AG04450 (cell line): ENCODE measurements at regions of chr17 and their contacts with region 1.

Region 1: DNA sequence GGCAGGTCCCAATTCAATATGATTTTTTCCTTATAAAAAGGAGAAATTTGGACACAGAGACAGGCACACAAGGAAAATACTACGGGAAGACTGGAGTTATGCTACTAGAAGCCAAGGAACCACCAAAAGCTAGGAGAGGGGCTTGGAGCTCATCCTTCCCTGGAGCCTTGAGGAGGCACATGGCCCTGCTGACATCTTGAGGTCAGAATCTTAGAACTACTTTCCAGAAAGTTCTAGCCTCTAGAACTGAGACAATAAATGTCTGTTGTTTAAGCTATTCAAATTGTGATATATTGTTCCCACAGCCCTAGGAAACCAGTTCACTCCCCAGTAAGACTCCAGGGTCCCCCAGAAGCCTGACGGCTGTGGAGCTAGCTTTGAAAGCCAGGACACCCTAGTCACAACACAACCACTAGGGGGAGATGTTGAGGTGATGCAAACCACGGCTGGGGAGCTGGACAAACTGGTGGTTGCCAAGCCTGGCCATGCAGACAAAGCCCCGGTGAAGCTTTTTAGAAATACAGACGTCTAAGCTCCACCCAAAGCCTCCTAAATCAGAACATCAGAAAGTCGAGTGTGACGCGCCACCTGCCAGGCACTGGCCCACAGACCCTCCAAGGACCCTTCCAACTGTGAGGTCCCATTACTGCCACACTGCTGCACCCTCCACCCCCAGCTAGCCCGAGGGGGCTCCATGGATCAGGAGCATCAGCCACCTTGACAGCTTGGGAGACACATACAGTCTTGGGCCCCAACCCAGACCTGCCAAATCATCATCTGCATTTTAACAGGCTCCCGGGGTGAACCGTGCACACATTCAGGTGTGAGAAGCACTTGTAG is 106.4 kb downstream of the SLC39A11 start:
- DNase-seq: peak; percentile 56
- H3K4me3 ChIP-seq: no peak overlapping the region
- H3K27ac ChIP-seq: no peak overlapping the region
- H3K27me3 ChIP-seq: no peaks in the 10 kb centered on the region
- CTCF ChIP-seq: peak; percentile 91

Region 2: GRCh38 chr17:72955391-72956140 is 30.5 kb before region 1 on chr17:
- CTCF ChIA-PET with region 1: interaction called, 12 read pairs
- POLR2A ChIA-PET with region 1: no interaction called
- DNase-seq: no peak
- H3K4me3 ChIP-seq: no peak overlapping the region
- H3K27ac ChIP-seq: no peak overlapping the region
- H3K27me3 ChIP-seq: no peaks in the 10 kb centered on the region
- CTCF ChIP-seq: no peak

Region 3: GRCh38 chr17:72997559-72997958 is 11.5 kb after region 1 on chr17:
- CTCF ChIA-PET with region 1: interaction called, 21 read pairs
- POLR2A ChIA-PET with region 1: no interaction called
- DNase-seq: no peak
- H3K4me3 ChIP-seq: no peak overlapping the region
- H3K27ac ChIP-seq: no peak overlapping the region
- H3K27me3 ChIP-seq: no peaks in the 10 kb centered on the region
- CTCF ChIP-seq: no peak

Region 4: GRCh38 chr17:73092523-73093135 is 106.5 kb after region 1 on chr17 and contains the start of gene SLC39A11:
- CTCF ChIA-PET with region 1: interaction called, 15 read pairs
- POLR2A ChIA-PET with region 1: no interaction called
- DNase-seq: peak; percentile 76
- H3K4me3 ChIP-seq: peak within 1 kb of the TSS; percentile 88
- H3K27ac ChIP-seq: peak within 1 kb of the TSS; percentile 47
- H3K27me3 ChIP-seq: peaks cover 6% of the 10 kb centered on the region
- CTCF ChIP-seq: no peak
- polyA plus RNA-seq, gene SLC39A11: 18.0 and 19.0 TPM in 2 replicates

Region 5: GRCh38 chr17:73166731-73167581 is 180.9 kb after region 1 on chr17:
- CTCF ChIA-PET with region 1: interaction called, 11 read pairs
- POLR2A ChIA-PET with region 1: no interaction called
- DNase-seq: no peak
- H3K4me3 ChIP-seq: peak overlapping the region; percentile 57
- H3K27ac ChIP-seq: no peak overlapping the region
- H3K27me3 ChIP-seq: peaks cover 60% of the 10 kb centered on the region
- CTCF ChIP-seq: no peak

Region 6: DNA sequence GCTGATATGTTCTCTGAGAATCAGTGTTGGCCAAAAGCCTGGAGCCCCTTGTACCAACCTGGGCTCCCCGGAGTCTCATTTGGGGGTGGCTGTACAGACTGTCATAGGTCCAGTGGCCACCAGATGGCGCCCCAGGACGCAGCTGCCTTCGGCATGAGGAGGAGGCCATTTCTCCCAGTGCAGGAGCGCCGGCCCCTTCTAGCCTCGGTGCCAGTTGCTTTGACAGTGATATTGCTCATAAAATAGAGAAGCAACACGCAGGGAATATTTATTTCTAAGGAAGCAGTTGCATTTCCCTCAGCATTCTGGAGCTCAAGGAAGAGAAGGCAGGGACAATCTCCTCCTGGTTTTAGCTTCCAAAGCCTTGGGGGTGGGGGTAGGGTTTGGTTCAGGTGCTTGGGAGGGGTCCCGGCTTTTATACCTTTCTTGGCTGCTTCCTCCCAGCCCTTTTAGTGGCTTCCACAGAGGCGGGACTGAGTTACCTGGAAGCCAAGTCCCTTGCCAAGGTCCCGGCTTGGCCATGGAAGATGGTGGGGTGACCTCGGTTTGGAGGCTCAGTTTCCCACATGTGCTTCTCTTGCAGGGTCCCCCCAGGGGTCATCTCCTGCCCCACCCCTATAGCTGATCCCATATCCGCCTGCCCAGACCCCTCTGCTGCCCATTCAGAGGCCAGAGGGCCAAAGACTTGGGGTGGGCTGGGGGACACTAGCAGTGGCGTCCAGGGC is 443.5 kb after region 1 on chr17:
- CTCF ChIA-PET with region 1: no interaction called
- POLR2A ChIA-PET with region 1: no interaction called
- DNase-seq: peak; percentile 34
- H3K4me3 ChIP-seq: no peak overlapping the region
- H3K27ac ChIP-seq: no peak overlapping the region
- H3K27me3 ChIP-seq: peaks cover 3% of the 10 kb centered on the region
- CTCF ChIP-seq: peak; percentile 97

Region 7: GRCh38 chr17:73575470-73576221 is 589.5 kb after region 1 on chr17:
- CTCF ChIA-PET with region 1: no interaction called
- POLR2A ChIA-PET with region 1: no interaction called
- DNase-seq: no peak
- H3K4me3 ChIP-seq: no peak overlapping the region
- H3K27ac ChIP-seq: no peak overlapping the region
- H3K27me3 ChIP-seq: no peaks in the 10 kb centered on the region
- CTCF ChIP-seq: no peak